Ovary (tissue), 10 donors: ENCODE measurements at regions of chr1 and their contacts with region 1.

Region 1: DNA sequence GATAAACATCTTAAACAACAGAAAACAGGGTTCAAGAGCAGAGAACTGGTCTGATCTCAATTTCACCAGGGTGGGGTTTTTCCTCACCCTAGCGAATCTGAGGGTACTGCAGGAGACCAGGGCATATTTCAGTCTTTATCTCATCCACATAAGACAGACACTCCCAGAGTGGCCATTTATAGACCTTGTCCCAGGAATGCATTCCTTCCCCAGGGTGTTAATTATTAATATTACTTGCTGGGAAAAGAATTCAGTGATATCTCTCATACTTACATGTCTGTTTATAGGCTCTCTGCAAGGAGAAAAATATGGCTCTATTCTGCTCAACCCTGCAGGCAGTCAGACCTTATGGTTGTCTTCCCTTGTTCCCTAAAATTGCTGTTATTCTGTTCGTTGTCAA is 84.1 kb downstream of the LYPLAL1 start:
- DNase-seq: no peak
- H3K4me3 ChIP-seq: no peak overlapping the region
- H3K27ac ChIP-seq: no peak overlapping the region
- H3K4me1 ChIP-seq: no peaks in the 10 kb centered on the region
- H3K27me3 ChIP-seq: no peaks in the 10 kb centered on the region
- CTCF ChIP-seq: no peak
- EP300 ChIP-seq: no peak
- POLR2A ChIP-seq: no peak

Region 2: DNA sequence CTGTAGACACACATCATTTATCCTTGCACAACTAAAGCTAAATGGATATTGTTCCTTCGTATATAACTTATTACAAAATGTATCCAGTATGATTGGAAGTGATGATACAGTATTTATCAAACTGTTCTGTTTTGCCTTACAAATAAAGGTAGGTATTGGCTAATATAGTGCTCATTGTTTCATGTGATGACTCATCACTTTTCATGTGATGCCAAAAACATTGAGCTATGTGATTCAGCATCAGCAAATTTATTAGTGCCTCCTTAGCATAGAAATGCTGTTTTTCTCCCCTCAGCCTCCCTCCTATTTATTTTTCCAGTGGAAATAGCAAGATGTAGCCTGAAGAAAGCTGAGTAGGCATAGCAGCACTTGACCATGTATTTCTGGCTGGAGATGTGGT is 312.7 kb before region 1 on chr1:
- intact Hi-C with region 1: loop called in 1 of 4 experiments (anchors 10 kb)
- DNase-seq: no peak
- H3K4me3 ChIP-seq: no peak overlapping the region
- H3K27ac ChIP-seq: no peak overlapping the region
- H3K4me1 ChIP-seq: no peaks in the 10 kb centered on the region
- H3K27me3 ChIP-seq: no peaks in the 10 kb centered on the region
- CTCF ChIP-seq: no peak
- EP300 ChIP-seq: no peak
- POLR2A ChIP-seq: no peak

Region 3: GRCh38 chr1:219476716-219477115 is 219.0 kb after region 1 on chr1:
- intact Hi-C with region 1: no loop called
- DNase-seq: no peak
- H3K4me3 ChIP-seq: no peak overlapping the region
- H3K27ac ChIP-seq: no peak overlapping the region
- H3K4me1 ChIP-seq: no peaks in the 10 kb centered on the region
- H3K27me3 ChIP-seq: no peaks in the 10 kb centered on the region
- CTCF ChIP-seq: no peak
- EP300 ChIP-seq: no peak
- POLR2A ChIP-seq: no peak